ENCODE measurements at regions of chr18 and their contacts with region 1.

Region 1: DNA sequence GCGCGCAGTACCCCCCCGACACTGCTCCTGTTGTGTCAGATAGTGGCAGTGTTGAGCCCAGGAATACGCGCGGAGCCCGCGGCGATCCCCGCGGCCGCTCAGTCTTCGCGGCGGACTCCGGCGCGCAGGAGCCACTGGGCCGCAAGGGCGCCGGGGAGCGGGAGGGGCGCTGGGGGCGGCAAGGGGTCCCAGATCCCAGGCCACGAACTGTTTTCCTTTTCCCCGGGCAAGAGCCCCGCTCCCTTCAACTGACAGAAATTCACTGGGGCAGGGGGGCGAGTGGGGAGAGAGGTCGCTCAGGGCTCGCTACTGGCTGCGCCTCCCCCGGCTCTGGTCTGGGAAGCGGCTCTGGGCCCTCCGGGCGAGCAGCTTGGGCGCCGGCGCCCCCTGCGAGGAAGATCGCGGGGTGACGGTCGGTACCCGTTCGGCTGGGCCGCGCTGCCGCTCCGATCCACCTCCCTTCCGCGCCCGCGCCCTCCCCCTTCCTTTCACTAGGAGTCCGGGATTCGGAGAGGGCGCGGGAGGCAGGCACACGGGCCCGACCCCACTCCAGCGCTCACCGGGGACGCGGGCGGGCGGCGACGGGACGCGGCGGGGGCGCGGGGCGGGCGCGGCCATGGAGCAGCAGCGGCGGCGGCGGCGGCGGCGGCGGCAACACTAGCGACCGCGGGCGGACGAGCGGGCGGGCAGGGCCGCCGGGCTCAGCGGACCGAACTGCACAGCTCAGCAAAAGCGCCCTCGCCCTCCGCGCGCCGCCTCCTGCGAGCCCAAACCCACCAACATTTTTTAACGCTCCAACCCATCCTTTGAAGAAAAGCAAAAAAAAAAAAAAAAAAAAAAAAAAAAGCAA is 1.4 kb upstream of the SETBP1 start:
- DNase-seq: peak; percentile 94
- H3K4me3 ChIP-seq: peak overlapping the region; percentile 64 to 94 (median 84)
- H3K27ac ChIP-seq: peak overlapping the region; percentile 93 to 99 (median 98)
- H3K4me1 ChIP-seq: peaks cover 0 to 34% (median 32%) of the 10 kb centered on the region in 4 donors
- H3K27me3 ChIP-seq: no peaks in the 10 kb centered on the region
- CTCF ChIP-seq: peak; percentile 42 to 65 (median 46)
- EP300 ChIP-seq: no peak
- POLR2A ChIP-seq: peak; percentile 66 to 79

Region 2: DNA sequence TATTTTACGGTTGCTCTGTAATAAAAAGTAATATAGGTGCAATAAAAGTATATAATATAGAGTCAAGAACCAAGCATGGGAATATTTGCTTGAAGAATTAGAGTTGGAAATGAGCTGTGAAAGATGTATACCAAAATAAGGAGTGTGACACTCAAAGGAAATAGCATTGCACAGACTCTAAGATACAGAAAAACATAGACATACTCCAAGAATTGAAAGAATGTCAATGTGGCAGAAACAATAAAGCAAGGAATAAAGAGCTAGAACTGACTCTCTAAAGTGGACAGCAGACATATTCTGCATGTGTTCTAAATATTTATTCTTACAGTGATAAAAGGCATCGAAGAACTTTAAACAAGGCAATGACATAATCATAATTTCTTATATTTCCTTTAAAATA is 559.7 kb before region 1 on chr18:
- intact Hi-C with region 1: loop called (anchors 10 kb)
- DNase-seq: no peak
- H3K4me3 ChIP-seq: no peak overlapping the region
- H3K27ac ChIP-seq: no peak overlapping the region
- H3K4me1 ChIP-seq: peaks cover 0 to 8% (median 0%) of the 10 kb centered on the region in 4 donors
- H3K27me3 ChIP-seq: no peaks in the 10 kb centered on the region
- CTCF ChIP-seq: no peak
- EP300 ChIP-seq: no peak
- POLR2A ChIP-seq: no peak

Region 3: DNA sequence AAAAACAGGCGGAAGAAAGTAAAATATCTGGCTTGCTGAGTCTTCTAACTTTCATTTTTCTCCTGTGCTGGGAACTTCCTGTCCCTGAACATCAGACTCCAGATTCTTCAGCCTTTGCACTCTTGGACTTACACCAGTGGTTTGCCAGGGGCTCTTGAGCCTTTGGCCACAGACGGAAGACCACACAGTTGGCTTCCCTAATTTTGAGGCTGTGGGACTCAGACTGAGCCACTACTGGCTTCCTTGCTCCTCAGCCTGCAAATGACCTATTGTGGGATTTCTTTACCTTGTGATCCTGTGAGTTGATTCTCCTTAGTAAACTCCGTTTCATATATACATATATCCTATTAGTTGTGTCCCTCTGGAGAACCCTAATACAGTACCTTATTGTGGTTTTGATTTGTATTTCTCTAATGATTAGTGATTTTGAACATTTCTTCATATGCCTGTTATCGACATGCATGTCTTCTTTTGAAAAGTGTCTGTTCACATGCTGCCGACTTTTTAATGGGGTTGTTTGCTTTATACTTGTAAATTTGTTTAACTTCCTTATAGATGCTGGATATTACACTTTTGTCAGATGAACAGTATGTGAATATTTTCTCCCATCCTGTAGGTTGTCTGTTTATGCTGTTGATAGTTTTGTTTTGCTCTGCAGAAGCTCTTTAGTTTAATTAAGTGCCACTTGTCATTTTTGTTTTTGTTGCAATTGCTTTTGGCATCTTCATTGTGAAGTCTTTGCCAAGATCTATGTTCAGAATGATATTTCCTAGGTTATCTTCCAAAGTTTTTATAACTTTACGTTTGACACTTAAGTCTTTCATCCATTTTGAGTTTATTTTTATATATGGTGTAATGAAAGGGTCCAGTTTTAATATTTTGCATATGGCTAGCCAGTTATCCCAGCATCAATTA is 347.4 kb before region 1 on chr18:
- intact Hi-C with region 1: no loop called
- DNase-seq: no peak
- H3K4me3 ChIP-seq: no peak overlapping the region
- H3K27ac ChIP-seq: no peak overlapping the region
- H3K4me1 ChIP-seq: no peaks in the 10 kb centered on the region
- H3K27me3 ChIP-seq: no peaks in the 10 kb centered on the region
- CTCF ChIP-seq: no peak
- EP300 ChIP-seq: no peak
- POLR2A ChIP-seq: no peak

Region 4: GRCh38 chr18:44594799-44595467 is 84.3 kb before region 1 on chr18:
- intact Hi-C with region 1: loop called (anchors 5 kb)
- DNase-seq: no peak
- H3K4me3 ChIP-seq: no peak overlapping the region
- H3K27ac ChIP-seq: peak overlapping the region in 3 of 4 donors; percentile 36 to 70 (median 43)
- H3K4me1 ChIP-seq: peaks cover 0 to 67% (median 45%) of the 10 kb centered on the region in 4 donors
- H3K27me3 ChIP-seq: no peaks in the 10 kb centered on the region
- CTCF ChIP-seq: no peak
- EP300 ChIP-seq: no peak
- POLR2A ChIP-seq: no peak

Region 5: DNA sequence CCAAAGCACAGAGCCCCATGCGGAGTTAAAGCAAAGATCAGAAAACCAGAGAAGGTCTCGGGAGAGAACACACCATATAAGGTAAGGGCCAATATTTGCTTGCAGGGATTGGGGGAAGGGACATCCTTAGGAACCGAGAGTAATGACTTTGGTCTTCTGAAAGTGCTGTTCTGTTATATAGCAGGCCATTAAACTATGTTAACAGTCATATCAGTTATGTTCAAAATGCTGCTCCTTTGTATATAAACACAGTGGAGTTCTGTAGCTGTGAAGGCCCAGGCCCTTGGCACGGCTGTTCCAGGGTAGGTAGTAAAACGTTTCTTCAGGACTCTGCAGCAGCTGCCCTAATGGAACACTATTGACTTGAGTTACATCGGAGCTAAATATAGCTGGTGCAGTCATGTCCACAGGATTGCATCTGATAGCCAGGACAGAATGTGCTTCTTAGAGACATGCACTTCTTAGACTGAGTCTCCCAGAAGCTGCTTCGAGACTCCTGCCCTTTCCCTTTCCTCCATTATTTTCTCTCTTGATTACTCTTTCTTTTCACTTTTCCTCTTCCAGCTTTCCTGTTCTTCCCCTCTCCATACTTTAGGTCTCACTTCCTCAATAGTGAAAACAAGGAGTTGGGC is 123.9 kb after region 1 on chr18:
- intact Hi-C with region 1: loop called (anchors 2 kb)
- DNase-seq: peak; percentile 97
- H3K4me3 ChIP-seq: no peak overlapping the region
- H3K27ac ChIP-seq: peak overlapping the region; percentile 87 to 90 (median 88)
- H3K4me1 ChIP-seq: peaks cover 3 to 87% (median 72%) of the 10 kb centered on the region in 4 donors
- H3K27me3 ChIP-seq: no peaks in the 10 kb centered on the region
- CTCF ChIP-seq: no peak
- EP300 ChIP-seq: peak; percentile 92 to 99 (median 96)
- POLR2A ChIP-seq: peak; percentile 14 to 27

Region 6: GRCh38 chr18:45014047-45014501 is 334.8 kb after region 1 on chr18:
- intact Hi-C with region 1: loop called (anchors 2 kb)
- DNase-seq: no peak
- H3K4me3 ChIP-seq: no peak overlapping the region
- H3K27ac ChIP-seq: peak overlapping the region in 3 of 4 donors; percentile 31 to 88 (median 86)
- H3K4me1 ChIP-seq: peaks cover 0 to 85% (median 54%) of the 10 kb centered on the region in 4 donors
- H3K27me3 ChIP-seq: no peaks in the 10 kb centered on the region
- CTCF ChIP-seq: peak in 2 of 4 experiments; percentile 8 to 27
- EP300 ChIP-seq: no peak
- POLR2A ChIP-seq: no peak

Region 7: DNA sequence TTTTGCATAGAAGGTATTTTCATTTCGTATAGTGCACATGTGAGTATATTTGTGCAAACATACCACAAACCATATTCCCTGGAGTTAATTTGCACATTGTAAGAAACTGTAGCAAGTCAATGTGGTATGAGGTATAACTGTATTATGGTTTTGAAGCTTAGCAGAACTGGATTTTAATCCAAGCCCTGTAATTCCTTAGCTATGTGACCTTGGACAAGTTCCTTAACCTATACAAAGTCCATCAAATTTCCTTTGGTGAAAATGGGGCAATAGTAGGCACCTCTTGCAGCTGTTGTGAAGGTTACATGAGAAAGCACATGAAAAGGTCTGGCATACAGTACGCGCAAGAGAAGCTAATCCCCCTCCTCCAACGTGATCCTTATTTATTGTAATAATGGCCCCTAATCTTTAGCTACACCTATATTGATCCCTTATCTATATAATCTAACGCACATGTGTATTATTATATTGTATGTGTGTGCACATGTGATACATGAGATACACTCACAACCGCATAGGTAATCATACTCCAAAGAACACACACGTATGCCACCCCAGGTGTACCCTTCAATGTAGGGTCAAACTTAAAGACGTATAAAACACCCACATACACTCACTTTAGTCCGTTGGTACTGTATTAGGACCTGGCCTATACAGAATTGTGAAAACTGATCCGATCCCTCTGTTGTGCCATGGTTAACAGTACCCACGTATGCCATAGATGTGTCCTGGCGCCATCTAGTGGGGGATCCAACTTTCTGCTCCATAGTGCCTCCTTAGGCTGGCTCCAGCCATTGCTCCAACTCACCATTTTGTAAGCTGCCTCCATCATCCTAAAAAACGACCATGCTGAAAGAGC is 533.1 kb after region 1 on chr18:
- intact Hi-C with region 1: loop called (anchors 2 kb)
- DNase-seq: peak; percentile 90
- H3K4me3 ChIP-seq: no peak overlapping the region
- H3K27ac ChIP-seq: no peak overlapping the region
- H3K4me1 ChIP-seq: peaks cover 0 to 6% (median 2%) of the 10 kb centered on the region in 4 donors
- H3K27me3 ChIP-seq: no peaks in the 10 kb centered on the region
- CTCF ChIP-seq: peak; percentile 89 to 96 (median 92)
- EP300 ChIP-seq: no peak
- POLR2A ChIP-seq: no peak

Measured in sigmoid colon (tissue), 7 donors.